MCF 10A (cell line): ENCODE measurements at regions of chr12 and their contacts with region 1.

Region 1: DNA sequence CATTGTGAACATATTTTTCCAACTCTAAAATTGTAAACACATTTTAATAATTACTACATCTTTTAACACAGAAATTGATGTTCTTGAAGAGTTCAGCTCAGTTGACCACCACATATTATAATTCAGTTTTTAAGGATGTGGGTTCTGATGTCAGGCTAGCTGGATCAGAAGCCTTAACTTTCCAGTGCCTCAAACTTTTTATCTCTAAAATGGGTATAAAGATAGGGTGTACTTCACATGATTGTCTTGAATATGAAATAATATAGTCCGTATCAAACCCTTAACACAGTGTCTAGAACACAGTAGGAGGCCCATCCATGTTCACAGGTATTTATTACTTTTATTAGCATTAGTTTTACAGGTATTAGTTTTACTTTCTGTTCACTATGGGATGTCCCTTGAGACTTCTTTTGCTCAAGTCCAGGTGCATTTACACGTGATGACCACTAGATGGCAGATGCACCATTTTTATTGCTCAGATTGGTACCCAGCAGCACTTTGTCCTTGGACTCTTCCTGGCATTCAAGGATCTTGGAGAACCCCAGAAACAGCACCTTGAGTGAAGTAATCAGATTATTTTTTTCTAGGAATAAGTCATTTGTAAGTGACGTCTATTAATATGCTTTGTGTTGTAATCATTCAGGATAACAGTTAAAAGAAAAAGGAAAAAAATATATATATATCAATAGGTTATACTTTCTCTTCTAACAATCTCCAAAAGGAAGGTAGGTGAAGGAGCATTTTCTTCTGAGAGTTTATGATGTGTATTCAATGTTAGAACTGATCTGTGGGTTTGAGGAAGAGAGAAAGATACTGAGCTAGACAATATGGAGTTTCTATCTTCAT is 580.2 kb downstream of the ETNK1 start:
- DNase-seq: peak; percentile 58
- H3K4me3 Mint-ChIP-seq: no peak overlapping the region
- H3K27ac Mint-ChIP-seq: no peak overlapping the region
- H3K4me1 Mint-ChIP-seq: peaks cover 9% of the 10 kb centered on the region
- H3K27me3 Mint-ChIP-seq: peaks cover 37% of the 10 kb centered on the region
- CTCF ChIP-seq: peak; percentile 84

Region 2: GRCh38 chr12:23193552-23193951 is 11.6 kb before region 1 on chr12:
- CTCF ChIA-PET with region 1: interaction called, 18 read pairs
- POLR2A ChIA-PET with region 1: no interaction called
- intact Hi-C with region 1: no loop called
- DNase-seq: no peak
- H3K4me3 Mint-ChIP-seq: no peak overlapping the region
- H3K27ac Mint-ChIP-seq: no peak overlapping the region
- H3K4me1 Mint-ChIP-seq: no peaks in the 10 kb centered on the region
- H3K27me3 Mint-ChIP-seq: no peaks in the 10 kb centered on the region
- CTCF ChIP-seq: no peak

Region 3: DNA sequence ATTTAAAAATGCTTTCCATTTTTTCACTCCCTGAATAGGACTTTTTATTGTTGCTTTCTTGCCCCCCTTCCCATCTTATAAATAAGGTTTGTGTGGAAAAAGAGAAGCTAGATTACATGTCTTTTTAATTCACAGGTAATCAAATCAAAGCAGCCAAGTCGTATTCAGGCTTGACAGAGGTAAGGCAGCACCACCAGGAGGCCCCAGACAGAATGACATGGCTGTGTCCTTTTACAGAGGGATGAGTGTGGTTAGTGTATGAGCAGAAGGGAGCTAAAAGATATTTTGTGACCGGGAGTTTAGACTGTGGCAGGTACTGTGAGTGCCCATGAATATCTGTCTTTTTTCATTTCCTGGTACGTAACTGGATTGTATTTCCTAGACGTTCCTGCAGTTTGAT is 15.9 kb after region 1 on chr12:
- CTCF ChIA-PET with region 1: interaction called, 15 read pairs
- POLR2A ChIA-PET with region 1: no interaction called
- intact Hi-C with region 1: no loop called
- DNase-seq: peak; percentile 42
- H3K4me3 Mint-ChIP-seq: no peak overlapping the region
- H3K27ac Mint-ChIP-seq: no peak overlapping the region
- H3K4me1 Mint-ChIP-seq: no peaks in the 10 kb centered on the region
- H3K27me3 Mint-ChIP-seq: peaks cover 9% of the 10 kb centered on the region
- CTCF ChIP-seq: peak; percentile 20